Colonic mucosa (tissue), 4 donors: ENCODE measurements at regions of chr9 and their contacts with region 1.

Region 1: GRCh38 chr9:97921959-97922724 is at the start of gene TRMO:
- DNase-seq: peak; percentile 98
- H3K4me3 ChIP-seq: peak within 1 kb of the TSS; percentile 48
- H3K27ac ChIP-seq: peak within 1 kb of the TSS; percentile 95
- H3K4me1 ChIP-seq: peaks cover 4% of the 10 kb centered on the region
- H3K27me3 ChIP-seq: no peaks in the 10 kb centered on the region
- CTCF ChIP-seq: peak; percentile 74
- total RNA-seq, gene TRMO: 10.2 to 11.9 TPM

Region 2: GRCh38 chr9:98255578-98256296 is 333.6 kb after region 1 on chr9 and contains the start of gene TBC1D2:
- intact Hi-C with region 1: loop called (anchors 5 kb)
- DNase-seq: peak; percentile 98
- H3K4me3 ChIP-seq: peak within 1 kb of the TSS; percentile 92
- H3K27ac ChIP-seq: peak within 1 kb of the TSS; percentile 99
- H3K4me1 ChIP-seq: no peaks in the 10 kb centered on the region
- H3K27me3 ChIP-seq: no peaks in the 10 kb centered on the region
- CTCF ChIP-seq: no peak
- total RNA-seq, gene TBC1D2: 20.1 to 26.9 TPM